ENCODE measurements at regions of chr5 and their contacts with region 1.

Region 1: GRCh38 chr5:106415541-106415940 is 1255.2 kb downstream of the EFNA5 start:
- DNase-seq: peak; percentile 66 to 79
- H3K4me3 ChIP-seq: no peak overlapping the region
- H3K27ac ChIP-seq: no peak overlapping the region
- H3K4me1 ChIP-seq: peaks cover 12% of the 10 kb centered on the region
- H3K27me3 ChIP-seq: no peaks in the 10 kb centered on the region
- CTCF ChIP-seq: no peak

Region 2: GRCh38 chr5:106397700-106398099 is 17.8 kb before region 1 on chr5:
- CTCF ChIA-PET with region 1: no interaction called
- POLR2A ChIA-PET with region 1: no interaction called
- intact Hi-C with region 1: loop called (anchors 1 kb)
- DNase-seq: peak; percentile 66 to 95
- H3K4me3 ChIP-seq: no peak overlapping the region
- H3K27ac ChIP-seq: peak overlapping the region; percentile 89
- H3K4me1 ChIP-seq: peaks cover 41% of the 10 kb centered on the region
- H3K27me3 ChIP-seq: no peaks in the 10 kb centered on the region
- CTCF ChIP-seq: no peak

Measured in PC-9 (cell line).